ACHN (cell line): ENCODE measurements at regions of chr1 and their contacts with region 1.

Region 1: GRCh38 chr1:112715264-112716053 is at the start of gene PPM1J:
- DNase-seq: peak; percentile 92

Region 2: GRCh38 chr1:112660072-112660471 is 55.4 kb before region 1 on chr1:
- in situ Hi-C with region 1: no loop called
- DNase-seq: no peak

Region 3: DNA sequence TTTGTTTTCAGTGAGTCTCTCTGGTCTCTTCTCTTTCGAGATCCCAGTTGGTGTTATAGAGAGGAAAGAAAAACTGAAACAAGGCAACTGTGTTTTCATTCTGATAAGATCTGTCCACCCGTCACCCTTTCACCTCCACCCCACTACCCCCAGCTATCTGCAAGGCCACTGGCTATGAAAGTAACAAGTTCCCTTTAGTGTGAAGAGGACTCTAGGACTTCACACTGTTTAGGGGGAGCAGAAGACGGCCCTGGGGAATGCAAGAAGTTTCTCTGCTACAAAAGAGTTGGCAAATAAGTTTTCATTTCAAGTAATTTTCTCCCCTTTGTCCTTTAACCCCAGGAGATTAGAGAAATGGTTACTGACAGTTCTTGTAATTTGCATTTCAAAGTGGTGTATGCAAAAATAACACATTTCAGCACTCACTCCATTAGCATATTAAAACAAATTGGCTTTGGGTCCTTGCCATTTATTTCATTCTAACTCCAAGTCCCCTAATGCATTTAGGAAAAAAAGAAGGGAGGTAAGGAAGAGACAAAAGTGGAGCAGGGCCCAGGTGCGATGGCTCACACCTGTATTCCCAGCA is 79.3 kb after region 1 on chr1:
- in situ Hi-C with region 1: loop called (anchors 5 kb)
- DNase-seq: no peak